GM18951 (cell line): ENCODE measurements at regions of chr12 and their contacts with region 1.

Region 1: DNA sequence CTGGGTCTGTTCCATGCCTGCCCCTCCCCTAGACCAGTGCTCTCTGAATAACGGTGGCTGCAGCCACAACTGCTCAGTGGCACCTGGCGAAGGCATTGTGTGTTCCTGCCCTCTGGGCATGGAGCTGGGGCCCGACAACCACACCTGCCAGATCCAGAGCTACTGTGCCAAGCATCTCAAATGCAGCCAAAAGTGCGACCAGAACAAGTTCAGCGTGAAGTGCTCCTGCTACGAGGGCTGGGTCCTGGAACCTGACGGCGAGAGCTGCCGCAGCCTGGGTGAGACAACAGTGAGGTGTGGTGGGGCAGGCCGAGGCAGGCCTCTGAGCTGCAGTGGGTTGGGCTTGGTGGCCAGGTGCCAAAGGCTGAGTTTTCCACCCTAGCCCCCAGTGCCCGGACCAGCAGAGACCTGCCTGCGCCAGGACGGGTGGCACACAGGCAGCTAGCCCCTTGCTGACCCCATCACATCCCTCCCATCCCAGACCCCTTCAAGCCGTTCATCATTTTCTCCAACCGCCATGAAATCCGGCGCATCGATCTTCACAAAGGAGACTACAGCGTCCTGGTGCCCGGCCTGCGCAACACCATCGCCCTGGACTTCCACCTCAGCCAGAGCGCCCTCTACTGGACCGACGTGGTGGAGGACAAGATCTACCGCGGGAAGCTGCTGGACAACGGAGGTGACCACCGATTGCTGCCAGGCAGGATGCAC is 28.2 kb upstream of the LRP1-AS start:
- POLR2A ChIP-seq: no peak

Region 2: GRCh38 chr12:57124259-57124877 is 51.2 kb before region 1 on chr12:
- in situ Hi-C with region 1: loop called (anchors 5 kb)
- POLR2A ChIP-seq: no peak

Region 3: DNA sequence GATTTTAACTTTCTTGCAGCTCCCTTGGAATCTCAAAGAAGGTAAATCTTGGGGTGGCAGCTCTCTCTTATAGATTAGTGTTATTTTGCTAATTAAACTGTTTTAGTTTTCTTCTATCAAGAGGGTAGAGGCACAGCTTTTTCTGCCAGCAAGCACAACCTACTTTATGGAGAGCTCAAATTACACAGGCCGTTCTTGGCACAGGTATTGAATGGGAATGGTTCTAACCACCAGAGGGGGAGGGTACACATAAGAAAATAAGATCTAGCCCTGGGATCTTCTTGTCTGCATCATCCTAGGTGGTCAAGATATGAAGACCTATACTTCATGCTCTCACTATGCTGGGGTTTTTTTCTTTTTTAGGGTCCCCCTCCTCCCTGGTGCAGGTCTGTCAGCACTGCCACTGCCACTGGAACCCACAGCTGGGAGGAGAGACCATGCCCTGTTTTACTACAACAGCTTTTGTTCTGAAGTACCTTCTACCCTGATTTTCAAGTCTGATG is 124.0 kb after region 1 on chr12:
- in situ Hi-C with region 1: no loop called
- POLR2A ChIP-seq: no peak